ENCODE measurements at regions of chr6 and their contacts with region 1.

Region 1: GRCh38 chr6:167350731-167351655 is 26.1 kb downstream of the TTLL2 start:
- DNase-seq: peak; percentile 77
- ATAC-seq: peak; percentile 77
- H3K4me3 Mint-ChIP-seq: peak overlapping the region; percentile 89
- H3K27ac Mint-ChIP-seq: peak overlapping the region; percentile 74
- H3K4me1 Mint-ChIP-seq: peaks cover 24% of the 10 kb centered on the region
- H3K27me3 Mint-ChIP-seq: peaks cover 21% of the 10 kb centered on the region
- CTCF ChIP-seq: peak; percentile 43

Region 2: DNA sequence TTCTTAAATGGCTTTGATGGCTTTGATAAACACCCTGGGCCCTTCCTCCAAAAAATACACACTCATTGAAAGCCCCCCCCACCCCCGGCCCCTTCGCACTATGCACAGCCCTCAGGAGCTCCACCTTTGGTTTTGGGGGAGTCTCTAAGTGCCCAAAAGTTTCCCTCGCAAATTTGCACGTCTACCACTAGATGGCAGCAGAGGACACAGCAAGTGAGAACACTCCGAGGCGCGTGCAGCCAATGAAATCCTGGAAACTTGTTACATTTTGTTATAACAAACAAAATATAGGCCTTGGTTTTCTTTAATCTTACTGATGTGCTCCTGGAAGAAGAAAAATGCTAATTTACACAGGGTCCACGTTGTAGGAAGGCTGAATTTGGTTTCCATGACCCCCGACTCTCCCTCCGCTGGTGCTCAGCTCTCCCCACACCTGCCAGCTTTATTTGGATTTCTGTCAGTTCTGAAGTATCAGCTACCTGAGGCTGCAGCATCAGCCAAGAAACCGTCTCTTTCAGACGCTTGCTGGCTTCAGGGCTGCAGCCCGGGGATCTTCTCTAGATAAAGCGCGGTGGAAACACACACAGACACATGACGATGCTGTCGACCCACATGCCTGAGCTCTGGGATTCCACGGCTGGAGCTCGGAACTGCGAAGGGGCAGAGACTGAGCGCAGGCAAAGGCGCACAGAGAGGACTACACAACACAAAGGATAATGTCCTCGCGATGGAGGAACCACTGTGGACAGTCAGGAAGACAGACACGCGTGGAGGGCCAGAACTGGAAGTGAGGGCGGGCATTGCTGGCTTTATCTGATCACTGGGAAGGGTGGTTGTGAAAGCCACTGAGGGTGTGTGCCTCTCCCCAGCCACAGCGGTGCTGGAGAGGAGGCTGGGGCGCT is 575.6 kb before region 1 on chr6:
- CTCF ChIA-PET with region 1: interaction called, 4 read pairs
- POLR2A ChIA-PET with region 1: no interaction called
- intact Hi-C with region 1: loop called (anchors 5 kb)
- DNase-seq: no peak
- ATAC-seq: peak; percentile 60
- H3K4me3 Mint-ChIP-seq: no peak overlapping the region
- H3K27ac Mint-ChIP-seq: no peak overlapping the region
- H3K4me1 Mint-ChIP-seq: no peaks in the 10 kb centered on the region
- H3K27me3 Mint-ChIP-seq: peaks cover 13% of the 10 kb centered on the region
- CTCF ChIP-seq: peak; percentile 45

Region 3: DNA sequence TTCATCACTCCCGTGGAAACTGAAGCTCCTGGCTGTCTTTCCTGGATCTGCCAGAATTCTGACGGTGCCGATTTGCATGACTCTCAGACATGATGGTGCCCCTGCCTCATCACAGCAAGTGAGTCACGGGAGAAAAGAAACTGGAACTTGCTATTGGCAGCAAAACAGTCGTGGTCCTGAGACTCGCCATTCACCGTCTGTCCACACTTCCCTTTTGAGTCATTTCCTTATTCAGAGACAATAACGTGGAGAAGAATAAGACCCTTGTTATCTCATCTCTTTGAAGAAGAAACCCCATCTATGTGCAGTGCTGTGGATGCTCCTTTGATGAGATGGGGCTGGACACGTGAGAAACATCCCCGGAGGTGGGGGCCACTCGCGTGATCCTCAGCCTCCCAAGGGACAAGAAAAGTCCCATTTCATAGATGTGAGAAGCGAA is 197.5 kb before region 1 on chr6:
- CTCF ChIA-PET with region 1: no interaction called
- POLR2A ChIA-PET with region 1: interaction called, 4 read pairs
- intact Hi-C with region 1: loop called (anchors 1 kb)
- DNase-seq: no peak
- ATAC-seq: peak; percentile 62
- H3K4me3 Mint-ChIP-seq: peak overlapping the region; percentile 88
- H3K27ac Mint-ChIP-seq: peak overlapping the region; percentile 88
- H3K4me1 Mint-ChIP-seq: peaks cover 58% of the 10 kb centered on the region
- H3K27me3 Mint-ChIP-seq: no peaks in the 10 kb centered on the region
- CTCF ChIP-seq: no peak

Region 4: DNA sequence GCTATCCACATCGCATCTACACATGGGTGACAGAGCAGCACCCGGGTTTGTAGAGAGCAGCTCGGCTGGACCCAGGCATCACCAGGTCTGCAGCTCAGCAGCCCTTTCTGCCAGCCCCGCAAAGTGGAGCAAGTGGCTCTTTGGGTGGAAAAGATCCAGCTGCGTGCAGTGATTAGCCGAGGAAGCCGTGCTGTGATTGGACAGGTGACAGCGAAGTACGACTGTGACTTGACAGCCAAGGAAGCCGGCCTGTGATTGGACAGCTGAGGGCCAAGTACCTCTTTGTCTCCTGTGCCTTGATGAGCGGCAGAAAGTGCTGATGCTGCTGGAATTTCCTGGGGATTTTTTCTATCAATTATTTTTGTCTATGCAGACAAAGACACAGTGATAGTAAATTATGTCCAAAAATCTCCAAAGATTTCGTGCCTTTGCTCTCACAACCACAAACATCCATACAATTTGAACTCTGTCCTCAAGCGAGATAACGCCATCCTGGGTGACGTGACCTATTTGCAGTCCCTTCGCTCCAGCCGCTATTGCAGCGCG is 131.0 kb before region 1 on chr6:
- CTCF ChIA-PET with region 1: no interaction called
- POLR2A ChIA-PET with region 1: no interaction called
- intact Hi-C with region 1: loop called (anchors 5 kb)
- DNase-seq: no peak
- ATAC-seq: no peak
- H3K4me3 Mint-ChIP-seq: no peak overlapping the region
- H3K27ac Mint-ChIP-seq: no peak overlapping the region
- H3K4me1 Mint-ChIP-seq: no peaks in the 10 kb centered on the region
- H3K27me3 Mint-ChIP-seq: no peaks in the 10 kb centered on the region
- CTCF ChIP-seq: no peak

Region 5: GRCh38 chr6:167826230-167826895 is 475.4 kb after region 1 on chr6:
- CTCF ChIA-PET with region 1: no interaction called
- POLR2A ChIA-PET with region 1: no interaction called
- intact Hi-C with region 1: loop called (anchors 10 kb)
- DNase-seq: no peak
- ATAC-seq: peak; percentile 88
- H3K4me3 Mint-ChIP-seq: peak overlapping the region; percentile 88
- H3K27ac Mint-ChIP-seq: no peak overlapping the region
- H3K4me1 Mint-ChIP-seq: peaks cover 24% of the 10 kb centered on the region
- H3K27me3 Mint-ChIP-seq: peaks cover 26% of the 10 kb centered on the region
- CTCF ChIP-seq: no peak

Region 6: GRCh38 chr6:167898673-167899311 is 547.8 kb after region 1 on chr6:
- CTCF ChIA-PET with region 1: interaction called, 3 read pairs
- POLR2A ChIA-PET with region 1: no interaction called
- intact Hi-C with region 1: loop called (anchors 5 kb)
- DNase-seq: no peak
- ATAC-seq: no peak
- H3K4me3 Mint-ChIP-seq: no peak overlapping the region
- H3K27ac Mint-ChIP-seq: no peak overlapping the region
- H3K4me1 Mint-ChIP-seq: no peaks in the 10 kb centered on the region
- H3K27me3 Mint-ChIP-seq: no peaks in the 10 kb centered on the region
- CTCF ChIP-seq: no peak

Region 7: DNA sequence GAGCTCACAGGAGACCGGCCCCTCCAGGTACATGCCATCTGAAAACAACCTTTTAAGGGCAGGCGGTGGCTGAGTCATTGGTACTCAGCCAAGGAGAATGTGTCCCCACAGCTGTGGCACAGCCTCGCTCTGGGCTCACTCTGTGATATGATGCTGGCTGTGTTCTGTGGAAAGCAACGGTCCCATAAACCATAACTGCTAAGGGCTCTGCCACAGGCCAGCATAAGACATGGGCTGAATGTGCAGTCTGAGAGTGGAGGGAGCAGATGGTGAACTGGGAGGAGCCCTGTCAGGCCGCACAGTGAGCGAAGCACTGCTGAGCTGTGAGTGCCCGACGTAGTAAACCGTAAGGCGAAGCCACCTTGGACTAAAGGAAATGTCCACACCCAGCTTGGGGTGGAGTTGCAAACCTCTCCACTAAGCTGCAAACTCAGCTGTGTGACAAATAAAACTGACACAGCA is 1526.9 kb after region 1 on chr6:
- CTCF ChIA-PET with region 1: no interaction called
- POLR2A ChIA-PET with region 1: no interaction called
- intact Hi-C with region 1: no loop called
- DNase-seq: no peak
- ATAC-seq: no peak
- H3K4me3 Mint-ChIP-seq: no peak overlapping the region
- H3K27ac Mint-ChIP-seq: no peak overlapping the region
- H3K4me1 Mint-ChIP-seq: no peaks in the 10 kb centered on the region
- H3K27me3 Mint-ChIP-seq: peaks cover 3% of the 10 kb centered on the region
- CTCF ChIP-seq: no peak

Measured in activated B cell treated with CpG ODN at 0.5 μM for 24 hours (primary cell).